Activated T-helper 1 cell treated with anti-CD3 and anti-CD28 coated beads, Interleukin-12 subunit alpha, Interleukin-12 subunit beta, Interleukin-2, Interleukin-4 antibody, amounts not matched to agents 30 ng/mL and 10 ng/mL and 1 ng/mL, durations not matched to agents 14 hours and 24 hours and 36 hours (primary cell): ENCODE measurements at regions of chr12 and their contacts with region 1.

Region 1: GRCh38 chr12:101792051-101792931 is 38.5 kb downstream of the GNPTAB start:
- DNase-seq: no peak
- H3K4me3 Mint-ChIP-seq: no peak overlapping the region
- H3K27ac Mint-ChIP-seq: peak overlapping the region; percentile 77
- H3K4me1 Mint-ChIP-seq: peaks cover 51% of the 10 kb centered on the region
- H3K27me3 Mint-ChIP-seq: no peaks in the 10 kb centered on the region

Region 2: DNA sequence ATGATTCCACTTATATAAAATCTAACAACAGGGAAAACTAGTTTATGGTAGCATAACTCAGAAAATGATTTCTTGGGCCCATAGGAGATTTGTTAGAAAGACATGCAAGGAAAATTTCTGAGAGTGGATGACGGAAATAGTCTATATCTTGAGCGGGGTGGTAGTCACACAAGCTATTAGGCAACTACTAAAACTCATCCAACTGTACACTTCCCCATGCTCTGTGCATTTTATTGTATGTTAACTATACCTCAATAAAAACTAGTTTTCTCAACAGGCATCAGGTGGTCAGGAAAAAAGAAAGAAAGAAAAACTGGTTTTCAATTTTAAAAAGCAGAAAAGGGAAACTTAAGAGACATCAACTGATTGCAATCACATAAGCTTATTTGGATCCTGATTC is 592.1 kb before region 1 on chr12:
- intact Hi-C with region 1: no loop called
- DNase-seq: no peak
- H3K4me3 Mint-ChIP-seq: no peak overlapping the region
- H3K27ac Mint-ChIP-seq: no peak overlapping the region
- H3K4me1 Mint-ChIP-seq: no peaks in the 10 kb centered on the region
- H3K27me3 Mint-ChIP-seq: peaks cover 2% of the 10 kb centered on the region

Region 3: DNA sequence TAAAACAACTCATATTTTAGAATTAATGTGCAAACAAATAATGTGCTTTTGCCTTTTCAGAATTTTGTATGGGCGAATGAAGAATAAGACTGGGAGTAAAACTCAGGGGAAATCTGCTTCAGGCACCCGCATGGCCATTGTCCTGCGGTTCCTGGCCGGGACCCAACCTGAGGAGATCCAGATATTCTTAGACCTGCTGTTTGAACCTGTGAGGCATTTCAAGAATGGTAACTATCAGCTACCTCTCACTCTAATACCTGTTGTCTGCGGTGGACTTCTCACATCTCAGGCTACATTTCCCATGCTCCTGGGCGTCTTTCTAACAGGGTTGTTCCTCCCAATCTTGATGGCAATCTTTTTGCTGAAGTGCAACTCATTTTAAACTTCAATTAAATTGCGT is 465.3 kb before region 1 on chr12:
- intact Hi-C with region 1: no loop called
- DNase-seq: no peak
- H3K4me3 Mint-ChIP-seq: no peak overlapping the region
- H3K27ac Mint-ChIP-seq: no peak overlapping the region
- H3K4me1 Mint-ChIP-seq: no peaks in the 10 kb centered on the region
- H3K27me3 Mint-ChIP-seq: no peaks in the 10 kb centered on the region

Region 4: DNA sequence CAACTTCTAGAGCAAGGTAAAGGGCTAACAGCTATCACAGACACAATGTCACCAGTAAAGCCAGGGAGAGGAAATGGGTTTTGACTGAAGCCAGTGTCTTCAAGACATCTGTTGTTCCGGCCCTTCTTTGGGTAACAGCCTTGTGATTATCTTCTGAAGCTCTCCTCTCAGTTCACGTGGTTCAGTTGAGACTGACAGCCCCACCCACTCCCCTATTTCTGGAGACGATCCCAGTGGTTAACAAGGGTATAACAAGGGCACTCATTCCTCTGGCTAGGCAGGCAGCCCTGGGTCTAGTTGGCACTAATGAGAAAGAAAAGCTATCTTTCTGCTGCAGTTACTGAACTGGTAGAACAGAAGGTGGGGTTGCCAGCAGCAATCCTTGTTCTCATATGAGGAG is 31.6 kb after region 1 on chr12:
- intact Hi-C with region 1: loop called (anchors 1 kb)
- DNase-seq: peak; percentile 62
- H3K4me3 Mint-ChIP-seq: peak overlapping the region; percentile 57
- H3K27ac Mint-ChIP-seq: peak overlapping the region; percentile 87
- H3K4me1 Mint-ChIP-seq: peaks cover 77% of the 10 kb centered on the region
- H3K27me3 Mint-ChIP-seq: no peaks in the 10 kb centered on the region

Region 5: DNA sequence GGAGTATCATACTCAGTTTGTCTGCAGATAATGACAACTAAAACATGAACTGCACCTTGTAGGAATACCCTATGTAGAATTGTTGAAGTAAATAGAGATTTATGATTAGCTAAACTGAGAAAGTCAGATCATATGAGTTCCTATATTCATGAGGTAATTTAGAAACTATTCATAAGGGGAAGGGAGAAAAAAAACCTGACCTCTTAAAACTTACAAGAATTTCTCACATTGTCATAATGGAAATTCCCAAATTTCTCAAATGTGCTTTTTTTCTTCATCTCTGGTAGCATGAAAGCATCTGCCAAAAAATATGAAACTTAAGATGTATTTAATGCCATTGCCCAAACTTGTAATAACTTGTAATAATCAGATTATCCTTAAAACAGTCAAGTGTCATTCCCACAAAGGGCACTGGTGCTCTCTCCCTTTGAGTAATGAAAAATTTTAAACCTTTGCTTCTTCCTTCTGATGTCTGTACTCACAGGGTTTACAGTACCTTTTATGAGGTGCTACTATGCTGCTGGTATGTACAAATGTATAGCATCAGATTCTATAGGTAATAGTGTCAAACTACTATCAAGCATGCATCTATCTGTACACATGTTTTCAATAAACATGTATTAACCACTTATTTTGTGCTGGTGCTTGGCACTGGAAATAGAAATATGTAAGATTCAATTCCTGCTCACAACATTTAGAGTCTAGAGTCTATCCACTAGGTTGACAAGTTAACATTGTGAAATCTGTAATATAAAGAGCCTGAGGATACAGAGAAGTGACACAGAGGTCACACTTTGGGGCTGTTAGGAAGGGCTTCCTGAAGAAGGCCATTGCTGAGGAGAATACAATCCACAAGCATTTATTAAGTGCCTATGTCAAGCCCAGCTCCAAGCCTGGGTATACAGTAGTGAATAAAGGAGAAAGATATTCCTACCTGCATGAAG is 67.6 kb after region 1 on chr12:
- intact Hi-C with region 1: loop called (anchors 1 kb)
- DNase-seq: no peak
- H3K4me3 Mint-ChIP-seq: no peak overlapping the region
- H3K27ac Mint-ChIP-seq: no peak overlapping the region
- H3K4me1 Mint-ChIP-seq: peaks cover 34% of the 10 kb centered on the region
- H3K27me3 Mint-ChIP-seq: no peaks in the 10 kb centered on the region

Region 6: DNA sequence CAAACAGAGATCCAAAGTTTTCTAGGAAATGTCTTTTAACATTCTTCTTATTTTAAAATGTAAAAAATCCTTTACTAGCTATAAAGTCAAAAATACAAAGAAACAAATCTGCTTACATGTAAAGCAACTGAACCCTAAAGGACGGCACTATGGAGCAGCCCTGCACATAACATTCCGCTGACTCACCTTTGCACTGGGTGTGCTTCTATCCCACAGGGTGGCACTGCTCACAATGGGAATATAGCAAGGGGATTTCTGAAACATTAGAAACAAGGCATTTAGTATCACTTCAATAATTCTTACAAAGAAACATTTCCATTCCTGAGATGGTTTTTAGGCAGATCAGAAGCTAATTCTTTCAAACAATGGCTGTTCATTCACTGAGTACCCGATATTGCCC is 1609.1 kb after region 1 on chr12:
- intact Hi-C with region 1: no loop called
- DNase-seq: no peak
- H3K4me3 Mint-ChIP-seq: no peak overlapping the region
- H3K27ac Mint-ChIP-seq: no peak overlapping the region
- H3K4me1 Mint-ChIP-seq: no peaks in the 10 kb centered on the region
- H3K27me3 Mint-ChIP-seq: no peaks in the 10 kb centered on the region